Right ventricle myocardium inferior (tissue), 1 donor: ENCODE measurements at regions of chr16 and their contacts with region 1.

Region 1: DNA sequence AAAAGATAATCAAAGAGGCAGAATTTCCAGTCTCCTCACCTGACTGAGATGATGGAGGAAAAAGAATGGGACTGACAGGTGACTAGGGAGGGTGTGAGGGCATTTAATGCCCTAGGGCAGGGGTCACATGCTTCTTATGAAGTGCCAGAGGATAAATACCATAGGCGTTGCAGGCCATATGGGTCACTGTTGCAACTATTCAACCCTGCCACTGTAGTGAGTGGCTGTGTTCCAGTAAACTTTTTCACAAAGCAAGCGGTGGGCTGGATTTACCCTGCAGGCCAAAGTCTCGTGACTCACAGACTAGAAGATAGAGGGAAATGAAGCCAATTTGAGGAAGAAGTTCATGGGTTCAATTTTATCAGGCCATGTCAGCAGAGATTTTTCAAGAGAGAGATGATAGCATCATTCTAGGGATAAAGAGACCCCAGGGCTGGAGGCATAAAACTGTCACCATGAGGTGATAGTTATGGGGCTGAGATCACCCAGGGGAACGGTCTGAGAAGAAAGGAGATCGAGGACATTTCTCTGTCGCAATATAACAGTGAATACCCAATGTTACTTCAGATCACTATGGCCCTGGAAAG is 8.6 kb downstream of the ARHGAP17 start:
- DNase-seq: no peak
- ATAC-seq: peak; percentile 51

Region 2: DNA sequence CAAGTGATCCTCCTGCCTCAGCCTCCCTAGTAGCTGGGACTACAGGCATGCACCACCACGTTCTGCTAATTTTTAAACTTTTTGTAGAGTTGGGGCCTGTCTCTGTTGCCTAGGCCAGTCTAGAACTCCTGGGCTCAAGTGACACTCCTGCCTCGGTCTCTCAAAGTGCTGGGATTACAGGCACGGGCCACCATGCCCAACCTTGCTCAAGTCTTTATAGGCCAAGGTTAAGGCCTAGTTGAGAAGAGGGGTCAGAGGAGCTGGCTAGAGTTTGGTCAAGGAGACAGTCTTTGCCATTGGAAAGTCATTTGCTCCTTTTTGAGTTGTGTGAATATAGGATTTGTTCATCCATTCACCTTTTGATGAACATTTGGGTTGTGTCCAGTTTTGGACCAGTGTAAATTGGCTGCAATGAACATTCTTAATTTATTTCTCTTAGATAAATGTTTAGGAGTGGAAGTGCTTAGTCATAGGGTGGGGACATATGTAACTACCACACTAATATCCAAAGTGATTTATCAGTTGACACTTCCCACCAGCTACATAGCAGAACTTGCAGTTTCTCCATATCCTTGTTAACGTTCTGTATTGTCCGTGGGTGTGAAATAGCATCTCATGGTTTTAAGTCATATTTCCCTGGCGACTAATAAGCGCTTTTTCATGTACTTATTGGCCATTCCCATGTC is 39.3 kb after region 1 on chr16:
- intact Hi-C with region 1: loop called (anchors 5 kb)
- DNase-seq: no peak
- ATAC-seq: no peak

Region 3: DNA sequence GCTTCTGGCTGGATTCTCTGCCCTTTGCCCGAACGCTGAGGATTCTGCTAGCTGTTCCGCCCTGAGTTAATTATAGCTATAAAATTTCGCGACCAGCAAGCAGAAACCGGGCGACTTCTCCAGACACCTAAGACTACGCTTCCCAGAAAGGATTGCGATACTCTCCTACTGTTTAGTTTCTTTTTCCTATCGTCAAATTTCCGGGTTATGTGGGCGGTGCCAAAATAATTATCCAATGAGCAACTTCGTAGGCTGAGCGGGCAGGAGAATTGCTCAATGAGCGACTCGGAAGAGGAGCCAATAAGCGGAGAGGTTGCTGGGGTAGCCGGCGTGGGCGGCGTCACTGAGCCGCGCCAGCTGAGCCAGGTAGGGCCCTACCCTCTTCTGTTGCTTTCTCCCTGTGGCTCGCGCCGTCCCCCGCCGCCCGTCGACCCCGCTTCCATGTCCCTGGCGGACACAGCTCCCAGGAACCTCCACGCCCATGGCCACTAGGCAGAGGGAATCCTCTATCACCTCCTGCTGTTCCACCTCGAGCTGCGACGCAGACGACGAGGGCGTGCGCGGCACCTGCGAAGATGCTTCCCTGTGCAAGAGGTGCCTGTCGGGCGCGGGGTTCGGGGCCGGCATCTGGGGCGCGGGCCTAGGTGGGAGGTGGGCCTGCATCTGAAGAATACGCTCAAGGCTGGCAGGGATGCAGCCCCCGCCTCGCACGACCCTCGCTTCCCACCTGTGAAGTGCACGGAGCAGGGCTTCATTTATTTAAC is 105.0 kb after region 1 on chr16 and contains the start of gene LCMT1:
- intact Hi-C with region 1: no loop called
- DNase-seq: peak; percentile 93
- ATAC-seq: peak; percentile 89
- total RNA-seq, gene LCMT1: 35.3 TPM

Region 4: DNA sequence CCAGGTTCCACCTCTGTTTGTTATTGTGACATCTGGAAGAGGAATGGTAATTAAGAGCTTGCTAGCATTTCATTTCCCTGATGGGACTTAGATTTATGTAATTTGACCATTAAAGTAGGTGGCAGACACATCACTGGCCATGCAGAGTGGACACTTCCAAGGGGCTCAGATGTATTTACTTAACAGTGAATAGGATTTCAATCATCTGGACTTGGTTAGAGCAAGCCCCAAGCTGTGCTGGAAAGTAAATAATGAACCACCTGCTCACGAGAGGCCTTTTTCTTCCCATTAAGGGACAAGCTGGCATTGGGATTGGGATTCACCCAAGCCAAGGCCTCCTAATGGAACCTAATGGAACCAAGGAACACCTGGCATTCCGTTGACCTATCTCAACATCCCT is 1080.5 kb after region 1 on chr16:
- intact Hi-C with region 1: no loop called
- DNase-seq: no peak
- ATAC-seq: no peak